Heart left ventricle (tissue), 16 donors: ENCODE measurements at regions of chr15 and their contacts with region 1.

Region 1: DNA sequence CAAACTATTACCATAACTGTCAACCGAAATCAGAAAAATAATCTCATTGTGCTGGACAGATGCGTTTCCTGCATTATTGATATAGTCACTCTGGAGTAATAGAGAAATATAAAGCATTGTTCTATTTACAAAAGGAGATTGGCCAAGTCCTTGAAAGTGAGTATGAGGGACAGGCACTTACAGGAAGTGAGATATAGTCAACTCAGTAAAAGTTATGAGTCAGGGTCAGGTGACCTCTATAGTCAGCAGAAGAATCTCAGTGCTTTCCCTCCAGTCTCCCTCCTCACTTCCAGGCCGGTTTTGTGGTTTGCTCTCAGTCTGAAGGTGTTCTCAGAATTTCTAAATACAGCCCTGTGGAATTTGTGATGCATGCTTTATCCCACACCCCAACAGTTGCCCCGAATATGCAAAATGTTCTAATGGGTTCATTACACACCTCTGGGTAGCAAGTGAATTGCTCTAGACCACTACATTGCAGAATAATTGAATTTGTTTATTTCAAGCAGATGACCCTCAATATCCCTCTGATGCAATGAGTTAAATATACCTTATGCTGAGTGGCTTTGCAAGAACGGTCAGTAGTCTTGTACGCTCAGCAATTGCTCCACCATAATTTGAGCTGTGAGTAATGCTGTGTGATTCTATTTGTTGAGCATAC is 787.7 kb downstream of the MCTP2 start:
- DNase-seq: no peak
- ATAC-seq: peak in 3 of 4 donors; percentile 63 to 78 (median 73)
- H3K4me3 ChIP-seq: no peak overlapping the region
- H3K27ac ChIP-seq: peak overlapping the region in 4 of 12 donors; percentile 3 to 24 (median 18)
- H3K4me1 ChIP-seq: peaks cover 0 to 34% (median 22%) of the 10 kb centered on the region in 12 donors
- H3K27me3 ChIP-seq: no peaks in the 10 kb centered on the region
- CTCF ChIP-seq: no peak
- POLR2A ChIP-seq: no peak

Region 2: DNA sequence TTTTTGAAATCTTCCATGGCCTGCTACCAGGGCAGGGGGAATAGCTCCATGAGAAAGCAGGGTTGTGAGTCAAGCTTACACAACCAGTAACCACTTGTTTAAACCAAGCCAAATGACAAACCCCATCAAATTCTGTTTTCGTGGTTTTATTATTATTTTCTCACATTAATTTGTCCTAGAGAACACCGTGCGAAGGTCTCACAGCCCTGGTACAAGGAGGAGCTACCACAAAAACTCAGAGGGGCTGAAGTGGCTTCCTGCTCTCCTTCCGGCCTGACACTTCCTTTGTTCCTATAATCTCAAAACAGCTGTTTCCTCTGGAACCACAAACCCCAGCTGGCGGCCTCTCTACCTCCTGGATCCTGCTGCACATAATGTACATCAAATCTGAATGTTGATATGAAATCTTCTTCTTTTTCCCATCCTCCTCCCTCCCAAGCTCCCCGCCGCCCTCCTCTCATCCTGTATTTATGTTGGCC is 411.8 kb before region 1 on chr15:
- intact Hi-C with region 1: no loop called
- DNase-seq: peak; percentile 37 to 64 (median 43)
- ATAC-seq: peak; percentile 55 to 81 (median 68)
- H3K4me3 ChIP-seq: no peak overlapping the region
- H3K27ac ChIP-seq: peak overlapping the region in 6 of 12 donors; percentile 14 to 55 (median 24)
- H3K4me1 ChIP-seq: peaks cover 0 to 20% (median 0%) of the 10 kb centered on the region in 12 donors
- H3K27me3 ChIP-seq: no peaks in the 10 kb centered on the region
- CTCF ChIP-seq: no peak
- POLR2A ChIP-seq: no peak

Region 3: DNA sequence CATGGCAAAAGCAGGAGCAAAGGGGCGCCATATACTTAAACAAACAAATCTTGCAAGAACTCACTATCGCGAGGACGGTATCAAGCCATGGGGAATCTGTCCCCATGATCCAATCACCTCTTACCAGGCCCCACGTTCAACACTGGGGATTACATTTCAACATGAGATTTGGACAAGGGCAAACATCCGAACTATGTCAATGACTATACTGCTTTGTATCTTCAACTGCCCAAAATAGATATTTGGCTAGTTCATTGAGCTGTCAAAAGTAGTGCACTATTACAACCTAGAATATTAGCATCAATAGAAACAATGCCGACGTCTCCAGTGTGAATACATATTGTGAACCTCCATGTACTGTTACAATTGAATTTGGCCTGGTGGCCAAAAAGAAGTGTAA is 27.3 kb before region 1 on chr15:
- intact Hi-C with region 1: loop called in 1 of 10 experiments (anchors 1 kb)
- DNase-seq: no peak
- ATAC-seq: peak in 1 of 4 donors; percentile 64
- H3K4me3 ChIP-seq: no peak overlapping the region
- H3K27ac ChIP-seq: no peak overlapping the region
- H3K4me1 ChIP-seq: no peaks in the 10 kb centered on the region
- H3K27me3 ChIP-seq: no peaks in the 10 kb centered on the region
- CTCF ChIP-seq: no peak
- POLR2A ChIP-seq: no peak

Region 4: GRCh38 chr15:95078003-95078402 is 59.0 kb after region 1 on chr15:
- intact Hi-C with region 1: no loop called
- DNase-seq: no peak
- ATAC-seq: no peak
- H3K4me3 ChIP-seq: no peak overlapping the region
- H3K27ac ChIP-seq: peak overlapping the region in 5 of 12 donors; percentile 6 to 59 (median 49)
- H3K4me1 ChIP-seq: peaks cover 0 to 7% (median 0%) of the 10 kb centered on the region in 12 donors
- H3K27me3 ChIP-seq: no peaks in the 10 kb centered on the region
- CTCF ChIP-seq: no peak
- POLR2A ChIP-seq: no peak